Activated CD4-positive, alpha-beta T cell treated with anti-CD3 and anti-CD28 coated beads for 36 hours (primary cell): ENCODE measurements at regions of chr5 and their contacts with region 1.

Region 1: GRCh38 chr5:74576941-74577456 is 63.5 kb downstream of the ENC1 start:
- DNase-seq: peak; percentile 22
- ATAC-seq: peak; percentile 34
- H3K4me3 Mint-ChIP-seq: no peak overlapping the region
- H3K27ac Mint-ChIP-seq: peak overlapping the region; percentile 58
- H3K4me1 Mint-ChIP-seq: peaks cover 47% of the 10 kb centered on the region
- H3K27me3 Mint-ChIP-seq: no peaks in the 10 kb centered on the region

Region 2: GRCh38 chr5:73902327-73903051 is 674.5 kb before region 1 on chr5:
- CTCF ChIA-PET with region 1: no interaction called
- POLR2A ChIA-PET with region 1: no interaction called
- intact Hi-C with region 1: loop called (anchors 5 kb)
- DNase-seq: no peak
- ATAC-seq: no peak
- H3K4me3 Mint-ChIP-seq: no peak overlapping the region
- H3K27ac Mint-ChIP-seq: no peak overlapping the region
- H3K4me1 Mint-ChIP-seq: peaks cover 7% of the 10 kb centered on the region
- H3K27me3 Mint-ChIP-seq: peaks cover 18% of the 10 kb centered on the region

Region 3: DNA sequence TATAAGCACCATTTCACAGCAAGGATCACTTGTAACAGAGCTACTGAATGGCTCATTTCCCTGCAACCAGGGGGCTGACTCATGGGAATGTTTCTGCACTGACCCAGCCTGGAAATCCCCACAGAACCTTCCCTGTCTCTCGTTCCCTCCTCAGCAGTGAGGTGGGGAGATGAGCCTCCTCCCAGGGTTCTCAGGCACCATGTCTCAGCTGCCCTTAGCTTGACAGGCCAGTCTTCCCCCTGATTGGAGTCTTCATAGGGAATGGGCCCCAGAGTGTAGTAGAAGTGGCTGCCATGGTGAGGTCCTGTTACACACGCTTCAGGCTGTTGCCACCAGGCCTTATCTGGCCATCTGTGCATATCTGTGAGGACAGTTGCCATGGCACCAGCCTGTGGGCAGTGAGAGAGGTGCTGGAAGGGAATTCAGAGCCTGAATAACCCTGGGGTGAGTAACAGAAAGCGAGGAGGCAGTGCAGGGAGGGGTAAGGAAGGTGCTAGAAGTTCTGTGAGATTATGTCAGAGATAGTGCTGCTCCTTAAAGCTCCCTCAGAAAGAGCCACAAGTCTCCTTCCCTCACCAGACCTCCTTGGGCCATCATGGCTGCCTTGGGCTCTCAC is 260.8 kb before region 1 on chr5:
- CTCF ChIA-PET with region 1: interaction called, 3 read pairs
- POLR2A ChIA-PET with region 1: no interaction called
- intact Hi-C with region 1: loop called (anchors 1 to 2 kb)
- DNase-seq: peak; percentile 62
- ATAC-seq: peak; percentile 55
- H3K4me3 Mint-ChIP-seq: no peak overlapping the region
- H3K27ac Mint-ChIP-seq: peak overlapping the region; percentile 39
- H3K4me1 Mint-ChIP-seq: peaks cover 24% of the 10 kb centered on the region
- H3K27me3 Mint-ChIP-seq: peaks cover 20% of the 10 kb centered on the region

Region 4: GRCh38 chr5:74631081-74631953 is 54.3 kb after region 1 on chr5:
- CTCF ChIA-PET with region 1: no interaction called
- POLR2A ChIA-PET with region 1: interaction called, 4 read pairs
- intact Hi-C with region 1: loop called (anchors 1 to 2 kb)
- DNase-seq: peak; percentile 57
- ATAC-seq: peak; percentile 80
- H3K4me3 Mint-ChIP-seq: no peak overlapping the region
- H3K27ac Mint-ChIP-seq: peak overlapping the region; percentile 82
- H3K4me1 Mint-ChIP-seq: peaks cover 31% of the 10 kb centered on the region
- H3K27me3 Mint-ChIP-seq: peaks cover 6% of the 10 kb centered on the region

Region 5: GRCh38 chr5:74684900-74685851 is 108.2 kb after region 1 on chr5 and contains the start of gene HEXB:
- CTCF ChIA-PET with region 1: no interaction called
- POLR2A ChIA-PET with region 1: no interaction called
- intact Hi-C with region 1: loop called in 1 of 2 experiments (anchors 1 kb)
- DNase-seq: peak; percentile 94
- ATAC-seq: peak; percentile 98
- H3K4me3 Mint-ChIP-seq: peak within 1 kb of the TSS; percentile 73
- H3K27ac Mint-ChIP-seq: peak within 1 kb of the TSS; percentile 87
- H3K4me1 Mint-ChIP-seq: peaks cover 21% of the 10 kb centered on the region
- H3K27me3 Mint-ChIP-seq: no peaks in the 10 kb centered on the region
- total RNA-seq, gene HEXB: 42.6 to 47.6 TPM

Region 6: DNA sequence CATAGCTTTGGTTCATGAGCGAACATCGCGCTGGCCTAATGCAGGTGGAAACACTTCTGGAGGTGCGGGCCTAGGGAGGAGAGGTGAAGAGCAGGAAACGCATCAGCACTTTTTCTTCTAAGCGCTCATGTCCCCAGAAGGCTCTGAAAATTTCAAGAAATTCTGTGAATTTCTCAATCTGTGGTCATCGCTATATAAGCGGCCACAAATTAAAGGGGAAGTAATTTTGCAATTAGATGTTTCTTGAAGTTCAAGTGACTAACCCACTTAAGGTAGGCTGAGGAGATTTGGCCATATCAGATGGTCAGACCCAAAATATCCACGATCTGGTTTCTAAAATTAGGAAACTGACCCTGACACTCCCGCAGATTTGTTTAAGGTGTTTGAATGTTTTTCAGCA is 743.3 kb after region 1 on chr5:
- CTCF ChIA-PET with region 1: no interaction called
- POLR2A ChIA-PET with region 1: no interaction called
- intact Hi-C with region 1: loop called in 1 of 2 experiments (anchors 10 kb)
- DNase-seq: no peak
- ATAC-seq: no peak
- H3K4me3 Mint-ChIP-seq: no peak overlapping the region
- H3K27ac Mint-ChIP-seq: no peak overlapping the region
- H3K4me1 Mint-ChIP-seq: peaks cover 23% of the 10 kb centered on the region
- H3K27me3 Mint-ChIP-seq: no peaks in the 10 kb centered on the region